PC-3 (cell line): ENCODE measurements at regions of chr20 and their contacts with region 1.

Region 1: DNA sequence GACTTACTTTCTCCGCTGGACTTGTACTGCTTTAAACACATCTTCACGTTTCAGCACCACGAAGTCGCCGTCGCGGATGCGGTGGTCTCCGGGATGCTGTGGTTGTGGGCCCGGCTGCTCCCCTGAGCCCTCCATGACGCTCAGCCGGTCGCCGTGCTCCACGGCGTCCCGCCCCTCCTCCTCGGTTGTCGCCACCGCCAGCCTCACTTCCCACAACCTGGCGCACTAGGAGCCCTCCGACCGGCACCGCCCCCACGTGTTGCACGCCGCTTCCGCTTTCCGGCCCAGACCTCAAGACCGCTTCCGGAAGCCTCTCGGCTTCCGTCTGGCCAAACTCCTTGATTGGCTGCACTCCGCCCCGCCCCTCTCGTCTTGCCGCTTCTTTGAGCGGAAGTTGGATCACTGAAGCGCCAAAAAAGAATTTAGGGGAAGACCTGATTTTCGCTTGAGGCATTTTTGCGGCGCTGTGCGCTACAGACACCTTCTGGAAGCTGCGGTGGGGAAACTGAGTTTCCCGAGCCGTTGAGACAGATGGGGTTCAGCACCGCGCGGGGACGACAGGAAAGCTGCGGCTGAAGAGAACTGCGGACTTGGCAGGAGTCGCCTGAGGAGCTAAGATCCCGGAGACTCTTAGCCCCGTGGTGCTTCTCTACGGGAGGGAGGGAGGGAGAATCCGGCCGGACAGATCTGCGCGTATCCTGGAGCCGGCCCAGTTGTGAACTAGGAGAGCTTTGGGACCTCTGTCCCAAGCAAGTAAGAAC is at the starts of genes MCM8 and TRMT6:
- DNase-seq: peak; percentile 99
- ATAC-seq: peak; percentile 90
- H3K4me3 ChIP-seq: peak within 1 kb of the TSS; percentile 85
- H3K27ac ChIP-seq: peak within 1 kb of the TSS; percentile 77
- H3K4me1 ChIP-seq: peaks cover 47% of the 10 kb centered on the region
- H3K27me3 ChIP-seq: no peaks in the 10 kb centered on the region
- CTCF ChIP-seq: no peak
- total RNA-seq, gene MCM8: 26.6 and 27.0 TPM in 2 replicates
- total RNA-seq, gene TRMT6: 35.4 and 44.0 TPM in 2 replicates

Region 2: GRCh38 chr20:5757949-5758348 is 192.5 kb before region 1 on chr20:
- CTCF ChIA-PET with region 1: no interaction called
- POLR2A ChIA-PET with region 1: no interaction called
- intact Hi-C with region 1: no loop called
- DNase-seq: no peak
- ATAC-seq: no peak
- H3K4me3 ChIP-seq: no peak overlapping the region
- H3K27ac ChIP-seq: no peak overlapping the region
- H3K4me1 ChIP-seq: no peaks in the 10 kb centered on the region
- H3K27me3 ChIP-seq: no peaks in the 10 kb centered on the region
- CTCF ChIP-seq: no peak

Region 3: DNA sequence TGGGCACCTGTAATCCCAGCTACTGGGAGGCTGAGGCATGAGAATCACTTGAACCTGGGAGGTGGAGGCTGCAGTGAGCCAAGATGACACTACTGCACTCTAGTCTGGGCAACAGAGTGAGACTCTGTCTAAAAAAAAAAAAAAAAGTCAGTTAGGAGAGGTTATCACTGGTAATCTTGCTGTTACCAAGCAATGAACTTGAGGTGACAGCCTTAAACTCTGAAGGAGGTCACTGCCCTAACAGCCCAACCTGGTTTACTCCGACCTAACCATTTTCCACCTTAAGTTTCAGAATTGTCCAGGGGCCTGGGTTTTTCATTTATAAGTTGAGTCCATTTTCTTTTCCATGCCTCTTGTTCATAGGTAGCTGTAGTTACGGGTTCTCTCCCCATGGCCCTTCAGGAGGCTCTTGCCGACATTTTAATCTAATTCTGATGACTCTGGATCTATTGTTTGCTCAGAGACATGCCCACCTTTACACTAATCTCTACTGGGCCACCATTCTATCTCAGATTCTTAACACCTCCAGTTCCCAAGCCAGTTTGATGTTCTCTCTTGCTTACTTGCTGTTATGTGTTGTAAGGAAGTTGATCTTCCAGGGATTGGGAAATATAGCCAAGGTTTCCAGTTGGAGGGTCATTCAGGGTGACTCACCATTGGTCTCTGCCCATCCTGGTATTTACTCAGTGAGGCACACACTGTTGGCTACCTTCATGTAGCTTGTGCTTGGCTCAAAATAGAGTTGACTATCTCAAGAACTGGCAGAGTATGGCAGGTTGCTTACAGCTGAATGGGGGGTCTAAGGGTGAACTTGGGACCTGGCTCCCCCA is 171.2 kb before region 1 on chr20:
- CTCF ChIA-PET with region 1: no interaction called
- POLR2A ChIA-PET with region 1: interaction called, 14 read pairs
- intact Hi-C with region 1: no loop called
- DNase-seq: peak; percentile 85
- ATAC-seq: peak; percentile 74
- H3K4me3 ChIP-seq: no peak overlapping the region
- H3K27ac ChIP-seq: peak overlapping the region; percentile 30
- H3K4me1 ChIP-seq: peaks cover 30% of the 10 kb centered on the region
- H3K27me3 ChIP-seq: no peaks in the 10 kb centered on the region
- CTCF ChIP-seq: no peak

Region 4: DNA sequence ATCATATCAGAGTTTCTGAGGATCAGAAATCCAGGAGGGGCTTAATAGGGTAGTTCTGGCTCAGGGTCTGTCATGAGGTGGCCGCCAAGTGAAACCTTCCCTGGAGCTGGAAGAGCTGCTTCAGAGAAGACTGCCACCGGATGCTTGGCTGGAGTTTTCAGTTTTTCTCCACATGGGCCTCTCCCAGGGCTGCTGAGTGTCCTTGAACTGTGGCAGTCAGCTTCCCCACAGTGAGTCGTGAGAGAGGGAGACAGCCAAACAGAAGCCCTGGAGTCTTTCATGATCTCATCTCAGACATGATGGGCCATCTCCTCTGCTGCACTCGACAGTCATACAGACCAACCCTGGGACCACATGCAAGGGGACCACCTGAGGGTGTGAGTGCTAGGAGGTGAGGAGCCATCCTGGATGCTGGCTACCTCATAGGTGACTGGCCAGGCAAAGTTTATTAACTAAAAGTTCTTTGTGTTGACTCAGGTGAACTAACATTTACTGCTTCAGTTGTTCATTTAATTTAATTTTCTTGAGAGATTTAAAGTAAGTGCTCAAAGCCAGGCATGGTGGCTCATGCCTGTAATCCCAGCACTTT is 128.7 kb before region 1 on chr20:
- CTCF ChIA-PET with region 1: no interaction called
- POLR2A ChIA-PET with region 1: no interaction called
- intact Hi-C with region 1: no loop called
- DNase-seq: no peak
- ATAC-seq: no peak
- H3K4me3 ChIP-seq: no peak overlapping the region
- H3K27ac ChIP-seq: no peak overlapping the region
- H3K4me1 ChIP-seq: 0 out of 2 replicates have a peak, but pooled peaks cover 3% of the 10 kb centered on the region
- H3K27me3 ChIP-seq: no peaks in the 10 kb centered on the region
- CTCF ChIP-seq: no peak

Region 5: DNA sequence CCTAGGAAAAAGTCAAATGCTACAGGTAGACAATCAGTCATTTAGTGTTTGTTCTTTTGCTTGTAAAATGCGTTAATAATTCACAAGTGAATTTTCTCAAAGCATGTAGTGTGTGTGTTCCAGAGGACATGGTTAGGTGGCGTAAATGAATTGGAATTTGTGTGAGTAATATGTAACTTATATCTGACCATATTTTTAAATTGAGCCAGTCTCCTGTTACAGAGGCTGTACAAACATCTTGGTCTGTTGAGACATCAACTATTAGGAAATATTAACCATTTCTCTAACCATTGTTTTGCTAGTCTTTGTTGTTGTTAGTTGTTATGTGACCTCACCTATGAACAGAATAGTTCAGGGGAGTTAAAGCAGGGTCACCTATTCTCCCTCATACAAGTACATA is 22.7 kb after region 1 on chr20:
- CTCF ChIA-PET with region 1: no interaction called
- POLR2A ChIA-PET with region 1: interaction called, 3 read pairs
- intact Hi-C with region 1: loop called (anchors 1 kb)
- DNase-seq: peak; percentile 97
- ATAC-seq: peak; percentile 94
- H3K4me3 ChIP-seq: peak overlapping the region; percentile 34; the same call in 1 of the 2 replicates
- H3K27ac ChIP-seq: peak overlapping the region; percentile 86
- H3K4me1 ChIP-seq: peaks cover 52% of the 10 kb centered on the region
- H3K27me3 ChIP-seq: no peaks in the 10 kb centered on the region
- CTCF ChIP-seq: no peak

Region 6: GRCh38 chr20:5991623-5992441 is 41.4 kb after region 1 on chr20:
- CTCF ChIA-PET with region 1: no interaction called
- POLR2A ChIA-PET with region 1: interaction called, 4 read pairs
- intact Hi-C with region 1: loop called (anchors 1 kb)
- DNase-seq: peak; percentile 72
- ATAC-seq: peak; percentile 87
- H3K4me3 ChIP-seq: no peak overlapping the region
- H3K27ac ChIP-seq: peak overlapping the region; percentile 71
- H3K4me1 ChIP-seq: peaks cover 32% of the 10 kb centered on the region
- H3K27me3 ChIP-seq: no peaks in the 10 kb centered on the region
- CTCF ChIP-seq: no peak

Region 7: DNA sequence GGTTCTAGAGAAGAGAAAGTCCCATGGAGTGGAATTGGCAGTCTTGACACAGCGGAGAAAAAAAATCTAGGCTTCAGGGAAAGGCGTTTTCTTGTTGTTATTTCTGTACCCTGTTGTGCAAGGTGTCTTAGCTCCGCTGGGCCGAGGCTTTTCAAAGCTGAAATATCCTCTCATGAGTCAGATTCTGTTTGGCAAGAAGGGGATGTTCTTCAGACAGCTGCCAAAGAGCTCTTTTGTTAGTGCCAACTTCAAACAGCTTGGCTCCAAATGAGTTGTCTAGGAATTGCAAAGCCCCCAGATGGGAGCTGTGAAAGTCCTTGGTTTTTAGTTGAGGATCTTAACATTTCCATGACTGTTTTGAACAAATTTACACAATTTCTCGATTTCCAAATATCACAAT is 57.8 kb after region 1 on chr20:
- CTCF ChIA-PET with region 1: no interaction called
- POLR2A ChIA-PET with region 1: no interaction called
- intact Hi-C with region 1: loop called (anchors 2 kb)
- DNase-seq: peak; percentile 92
- ATAC-seq: peak; percentile 36
- H3K4me3 ChIP-seq: peak overlapping the region; percentile 96
- H3K27ac ChIP-seq: no peak overlapping the region; the same call in 1 of the 2 replicates
- H3K4me1 ChIP-seq: peaks cover 23% of the 10 kb centered on the region
- H3K27me3 ChIP-seq: no peaks in the 10 kb centered on the region
- CTCF ChIP-seq: no peak

Region 8: DNA sequence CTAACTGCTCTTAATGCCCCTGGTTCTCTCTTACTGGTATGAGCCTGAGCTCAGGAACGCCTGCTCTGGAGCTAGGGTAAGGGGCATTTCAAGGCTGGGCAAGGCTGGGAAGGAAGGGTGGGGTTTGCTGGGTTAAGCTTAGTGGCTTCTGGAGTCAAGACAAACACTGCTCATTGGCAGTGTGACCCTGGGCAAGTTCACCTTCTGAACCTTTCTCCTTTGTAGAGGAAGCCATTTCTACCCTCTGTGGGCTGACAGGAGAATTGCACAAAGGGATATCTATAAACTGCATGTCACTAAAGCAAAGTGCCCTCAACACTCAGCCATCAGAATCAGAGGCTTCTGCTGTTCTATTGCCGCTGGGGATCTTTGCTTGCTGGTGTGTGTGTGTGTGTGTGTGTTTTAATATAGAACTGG is 123.7 kb after region 1 on chr20:
- CTCF ChIA-PET with region 1: no interaction called
- POLR2A ChIA-PET with region 1: interaction called, 8 read pairs
- intact Hi-C with region 1: loop called (anchors 5 kb)
- DNase-seq: peak; percentile 26
- ATAC-seq: peak; percentile 82
- H3K4me3 ChIP-seq: no peak overlapping the region
- H3K27ac ChIP-seq: no peak overlapping the region
- H3K4me1 ChIP-seq: no peaks in the 10 kb centered on the region
- H3K27me3 ChIP-seq: no peaks in the 10 kb centered on the region
- CTCF ChIP-seq: peak; percentile 53; the same call in 1 of the 2 replicates